ENCODE measurements at regions of chr19 and their contacts with region 1.

Region 1: DNA sequence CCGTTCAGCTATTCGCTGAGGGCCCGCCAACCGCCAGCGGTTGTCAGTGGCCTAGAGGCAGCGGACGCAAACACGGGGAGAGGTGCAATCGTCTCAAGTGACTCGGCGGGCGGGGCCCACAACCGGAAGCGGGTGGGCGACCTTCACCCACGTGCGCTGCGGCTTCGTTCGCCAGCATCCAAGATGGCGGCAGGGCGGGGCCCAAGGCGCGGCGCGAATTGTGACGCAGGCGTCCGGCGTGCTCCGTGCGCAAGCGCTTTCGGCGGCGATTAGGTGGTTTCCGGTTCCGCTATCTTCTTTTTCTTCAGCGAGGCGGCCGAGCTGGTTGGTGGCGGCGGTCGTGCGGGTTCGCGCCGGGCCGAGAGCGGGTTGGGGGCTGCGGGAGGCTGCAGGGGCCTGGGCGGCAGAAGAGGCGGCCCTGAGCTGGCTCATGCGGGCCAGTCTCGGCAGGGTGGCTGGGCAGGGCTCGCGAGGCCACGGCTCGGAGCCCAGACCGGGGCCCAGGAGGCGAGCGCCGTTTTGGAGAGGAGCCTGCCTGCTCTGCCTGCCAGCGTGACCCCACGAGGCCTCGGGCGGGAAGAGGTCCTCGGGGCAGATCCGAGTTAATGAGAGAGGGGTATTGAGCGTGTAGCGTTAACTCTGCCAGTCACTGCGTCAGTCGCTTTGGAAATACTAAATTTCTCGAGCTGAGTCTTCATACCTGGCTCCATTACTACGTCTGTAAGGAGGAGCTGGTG is at the start of gene UBA52:
- DNase-seq: peak; percentile 99
- H3K4me3 Mint-ChIP-seq: peak within 1 kb of the TSS; percentile 87
- H3K27ac Mint-ChIP-seq: peak within 1 kb of the TSS; percentile 98
- H3K4me1 Mint-ChIP-seq: peaks cover 9% of the 10 kb centered on the region
- H3K27me3 Mint-ChIP-seq: no peaks in the 10 kb centered on the region
- CTCF ChIP-seq: no peak
- total RNA-seq, gene UBA52: 1,330 and 1,392 TPM in 2 replicates

Region 2: GRCh38 chr19:18450931-18451845 is 120.5 kb before region 1 on chr19:
- CTCF ChIA-PET with region 1: interaction called, 3 read pairs
- POLR2A ChIA-PET with region 1: interaction called, 13 read pairs
- intact Hi-C with region 1: no loop called
- DNase-seq: peak; percentile 78
- H3K4me3 Mint-ChIP-seq: no peak overlapping the region
- H3K27ac Mint-ChIP-seq: peak overlapping the region; percentile 14
- H3K4me1 Mint-ChIP-seq: peaks cover 9% of the 10 kb centered on the region
- H3K27me3 Mint-ChIP-seq: no peaks in the 10 kb centered on the region
- CTCF ChIP-seq: peak; percentile 97

Region 3: GRCh38 chr19:18496167-18496979 is 75.4 kb before region 1 on chr19:
- CTCF ChIA-PET with region 1: interaction called, 4 read pairs
- POLR2A ChIA-PET with region 1: interaction called, 11 read pairs
- intact Hi-C with region 1: no loop called
- DNase-seq: peak; percentile 86
- H3K4me3 Mint-ChIP-seq: peak overlapping the region; percentile 53
- H3K27ac Mint-ChIP-seq: peak overlapping the region; percentile 67
- H3K4me1 Mint-ChIP-seq: peaks cover 22% of the 10 kb centered on the region
- H3K27me3 Mint-ChIP-seq: no peaks in the 10 kb centered on the region
- CTCF ChIP-seq: peak; percentile 10

Region 4: GRCh38 chr19:18594096-18594823 is 22.5 kb after region 1 on chr19:
- CTCF ChIA-PET with region 1: interaction called, 27 read pairs
- POLR2A ChIA-PET with region 1: interaction called, 87 read pairs
- intact Hi-C with region 1: no loop called
- DNase-seq: peak; percentile 73
- H3K4me3 Mint-ChIP-seq: no peak overlapping the region
- H3K27ac Mint-ChIP-seq: no peak overlapping the region
- H3K4me1 Mint-ChIP-seq: peaks cover 17% of the 10 kb centered on the region
- H3K27me3 Mint-ChIP-seq: no peaks in the 10 kb centered on the region
- CTCF ChIP-seq: peak; percentile 93

Region 5: GRCh38 chr19:18657590-18658365 is 86.0 kb after region 1 on chr19:
- CTCF ChIA-PET with region 1: no interaction called
- POLR2A ChIA-PET with region 1: no interaction called
- intact Hi-C with region 1: no loop called
- DNase-seq: no peak
- H3K4me3 Mint-ChIP-seq: no peak overlapping the region
- H3K27ac Mint-ChIP-seq: no peak overlapping the region
- H3K4me1 Mint-ChIP-seq: peaks cover 7% of the 10 kb centered on the region
- H3K27me3 Mint-ChIP-seq: peaks cover 18% of the 10 kb centered on the region
- CTCF ChIP-seq: no peak

Region 6: GRCh38 chr19:18919086-18919899 is 347.6 kb after region 1 on chr19 and contains the starts of genes COPE and DDX49:
- CTCF ChIA-PET with region 1: no interaction called
- POLR2A ChIA-PET with region 1: interaction called, 26 read pairs
- intact Hi-C with region 1: no loop called
- DNase-seq: peak; percentile 100
- H3K4me3 Mint-ChIP-seq: peak within 1 kb of the TSS; percentile 89
- H3K27ac Mint-ChIP-seq: peak within 1 kb of the TSS; percentile 91
- H3K4me1 Mint-ChIP-seq: peaks cover 14% of the 10 kb centered on the region
- H3K27me3 Mint-ChIP-seq: no peaks in the 10 kb centered on the region
- CTCF ChIP-seq: no peak
- total RNA-seq, gene COPE: 310 and 456 TPM in 2 replicates
- total RNA-seq, gene DDX49: 87.7 and 98.8 TPM in 2 replicates

Measured in MCF 10A (cell line).